Lower leg skin (tissue), 4 donors: ENCODE measurements at regions of chr4 and their contacts with region 1.

Region 1: DNA sequence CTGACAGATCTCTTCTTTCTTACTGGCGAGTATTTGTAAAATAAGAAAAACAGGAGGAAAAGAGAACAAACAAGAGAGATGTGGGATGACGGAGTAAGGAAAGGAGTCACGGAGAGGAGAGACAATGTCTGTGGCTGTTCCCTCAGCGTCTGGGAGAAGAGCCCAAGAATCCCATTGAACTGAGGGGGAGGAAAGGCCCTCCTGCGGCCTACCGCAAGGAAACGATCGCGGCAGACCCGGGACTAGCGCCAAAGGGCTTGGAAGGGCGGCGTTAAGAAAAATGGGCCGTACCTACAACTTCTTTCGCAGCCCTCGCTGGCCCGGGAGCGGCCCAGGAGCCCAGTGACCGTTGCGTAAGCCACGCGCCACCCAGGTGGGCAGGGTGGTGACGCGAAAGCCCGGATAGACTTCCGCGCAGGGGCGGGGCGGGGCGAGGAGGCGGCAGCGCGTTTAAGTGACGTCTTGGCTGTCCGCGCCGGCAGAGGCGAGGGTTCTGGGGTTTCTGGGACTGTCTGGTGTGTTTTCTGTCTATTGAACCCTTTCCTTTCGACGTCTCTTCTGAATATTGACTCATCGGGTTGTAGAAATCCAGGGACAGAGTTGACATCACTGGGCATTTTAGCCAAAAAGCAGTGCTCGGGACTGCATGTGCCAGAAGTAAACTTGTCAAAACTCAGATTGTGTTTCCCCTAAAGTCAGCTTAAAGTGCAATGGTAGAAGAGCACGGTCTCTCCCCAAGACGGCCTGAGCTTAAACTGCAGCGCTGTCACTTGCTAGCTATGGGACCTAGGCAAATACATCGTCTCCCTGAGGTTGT is at the start of gene SLC9B1:
- DNase-seq: peak; percentile 95 to 99
- H3K4me3 ChIP-seq: peak within 1 kb of the TSS; percentile 28
- CTCF ChIP-seq: no peak
- POLR2A ChIP-seq: peak in 1 of 2 donors; percentile 44
- total RNA-seq, gene SLC9B1: 0.30 to 1.4 (median 0.51) TPM

Region 2: GRCh38 chr4:102449751-102450352 is 569.7 kb before region 1 on chr4:
- intact Hi-C with region 1: loop called (anchors 10 kb)
- DNase-seq: peak in 1 of 2 donors; percentile 54
- H3K4me3 ChIP-seq: no peak overlapping the region
- CTCF ChIP-seq: peak in 1 of 3 donors; percentile 41
- POLR2A ChIP-seq: no peak

Region 3: GRCh38 chr4:102717448-102718092 is 301.9 kb before region 1 on chr4:
- intact Hi-C with region 1: no loop called
- DNase-seq: no peak
- H3K4me3 ChIP-seq: no peak overlapping the region
- CTCF ChIP-seq: peak in 1 of 3 donors; percentile 17
- POLR2A ChIP-seq: no peak

Region 4: DNA sequence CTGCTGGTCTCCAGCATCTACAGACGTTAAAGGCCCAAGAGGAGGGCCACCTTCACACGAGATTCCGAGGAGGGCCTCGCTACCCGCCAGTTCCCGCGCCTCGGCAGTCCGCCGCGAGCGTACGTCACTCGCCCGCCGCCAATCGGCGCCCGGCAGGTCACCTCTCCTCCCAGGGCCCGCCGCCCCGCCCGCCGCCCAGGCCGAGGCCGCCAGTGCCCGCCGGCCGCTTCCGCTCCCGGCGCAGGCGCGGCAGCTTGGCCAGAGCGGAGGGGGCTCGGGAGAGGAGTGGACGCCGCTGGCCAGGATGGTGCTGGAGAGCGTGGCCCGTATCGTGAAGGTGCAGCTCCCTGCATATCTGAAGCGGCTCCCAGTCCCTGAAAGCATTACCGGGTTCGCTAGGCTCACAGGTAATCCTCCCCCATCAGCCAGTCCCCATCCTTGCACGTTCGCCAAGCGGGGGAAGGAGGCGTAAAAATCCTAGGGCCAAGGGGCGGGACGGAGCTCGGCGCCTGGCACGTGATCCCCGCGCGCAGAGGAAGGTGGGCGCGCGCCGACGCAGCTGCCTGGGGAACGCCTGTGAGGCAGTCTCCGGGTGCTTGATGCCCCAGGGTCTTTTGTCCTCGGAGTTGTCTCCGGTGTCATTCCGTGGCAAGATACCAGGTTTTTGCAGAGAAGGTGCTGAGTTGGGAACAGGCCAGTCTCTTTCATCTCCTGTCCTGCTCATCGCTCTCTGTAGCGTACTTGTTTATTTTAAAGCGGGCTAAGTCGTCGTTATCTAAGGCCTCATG is 150.5 kb before region 1 on chr4 and contains the start of gene CISD2:
- intact Hi-C with region 1: loop called (anchors 10 kb)
- DNase-seq: peak; percentile 90 to 98
- H3K4me3 ChIP-seq: peak within 1 kb of the TSS; percentile 41
- CTCF ChIP-seq: peak in 1 of 3 donors; percentile 50
- POLR2A ChIP-seq: peak in 1 of 2 donors; percentile 86
- total RNA-seq, gene CISD2: 5.5 to 12.0 (median 11.3) TPM